ENCODE measurements at regions of chr3 and their contacts with region 1.

Region 1: GRCh38 chr3:112642912-112643506 is 2.1 kb upstream of the CCDC80 start:
- DNase-seq: peak; percentile 79
- H3K4me3 ChIP-seq: peak overlapping the region in 1 of 3 experiments; percentile 8
- H3K27ac ChIP-seq: peak overlapping the region; percentile 23
- H3K4me1 ChIP-seq: peaks cover 49% of the 10 kb centered on the region
- H3K27me3 ChIP-seq: no peaks in the 10 kb centered on the region
- CTCF ChIP-seq: peak; percentile 88 to 95

Region 2: GRCh38 chr3:112136959-112137693 is 505.9 kb before region 1 on chr3:
- CTCF ChIA-PET with region 1: no interaction called
- dilution Hi-C with region 1: no loop called
- in situ Hi-C with region 1: no loop called
- intact Hi-C with region 1: loop called (anchors 10 kb)
- DNase-seq: peak; percentile 53
- H3K4me3 ChIP-seq: no peak overlapping the region
- H3K27ac ChIP-seq: no peak overlapping the region
- H3K4me1 ChIP-seq: peaks cover 9% of the 10 kb centered on the region
- H3K27me3 ChIP-seq: no peaks in the 10 kb centered on the region
- CTCF ChIP-seq: peak; percentile 77 to 79

Region 3: GRCh38 chr3:112653209-112653871 is 10.3 kb after region 1 on chr3:
- CTCF ChIA-PET with region 1: interaction called, 13 read pairs
- dilution Hi-C with region 1: no loop called
- in situ Hi-C with region 1: no loop called
- intact Hi-C with region 1: loop called (anchors 1 kb)
- DNase-seq: peak; percentile 90
- H3K4me3 ChIP-seq: no peak overlapping the region
- H3K27ac ChIP-seq: peak overlapping the region; percentile 96
- H3K4me1 ChIP-seq: peaks cover 53% of the 10 kb centered on the region
- H3K27me3 ChIP-seq: no peaks in the 10 kb centered on the region
- CTCF ChIP-seq: no peak

Region 4: DNA sequence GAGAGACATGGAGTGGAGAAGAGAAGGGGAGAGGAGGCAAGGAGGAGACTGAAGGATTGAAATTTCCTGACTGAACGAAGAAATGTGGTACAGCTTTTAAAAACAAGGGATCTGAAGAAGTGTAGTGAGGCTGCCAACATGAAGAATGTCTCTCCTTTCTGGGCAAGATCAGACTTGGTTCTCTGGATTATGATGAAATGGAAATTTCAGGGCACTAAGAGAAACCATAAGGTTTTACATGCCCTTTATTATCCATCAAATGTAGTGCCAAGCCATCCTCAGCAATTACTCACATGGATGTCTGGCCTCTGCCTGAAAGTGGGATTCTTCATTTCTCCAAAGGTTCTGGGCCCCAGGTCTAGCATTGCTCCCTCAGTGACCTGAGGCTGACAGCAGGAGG is 75.5 kb after region 1 on chr3:
- CTCF ChIA-PET with region 1: no interaction called
- dilution Hi-C with region 1: no loop called
- in situ Hi-C with region 1: no loop called
- intact Hi-C with region 1: loop called (anchors 5 kb)
- DNase-seq: peak; percentile 76
- H3K4me3 ChIP-seq: no peak overlapping the region
- H3K27ac ChIP-seq: no peak overlapping the region
- H3K4me1 ChIP-seq: peaks cover 12% of the 10 kb centered on the region
- H3K27me3 ChIP-seq: no peaks in the 10 kb centered on the region
- CTCF ChIP-seq: no peak

Region 5: DNA sequence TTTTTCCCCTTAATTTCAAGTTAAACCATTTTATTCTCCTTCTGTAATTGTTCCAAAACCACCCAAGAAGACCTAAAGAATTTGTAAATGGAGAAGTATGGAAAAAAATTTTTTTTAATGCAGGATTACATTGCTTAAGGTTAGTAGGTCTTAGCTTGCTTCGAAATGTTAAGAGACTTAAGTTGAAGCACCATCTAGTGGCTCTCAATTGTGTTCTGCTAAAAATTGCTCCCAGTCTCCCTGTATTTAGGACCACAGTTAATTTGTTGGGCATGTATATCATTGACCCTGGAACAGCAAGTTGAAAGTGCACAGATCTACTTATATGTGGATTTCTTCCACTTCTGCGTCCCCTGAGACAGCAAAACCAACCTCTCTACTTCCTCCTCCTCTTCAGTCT is 171.3 kb after region 1 on chr3:
- CTCF ChIA-PET with region 1: interaction called, 7 read pairs
- dilution Hi-C with region 1: no loop called
- in situ Hi-C with region 1: loop called (anchors 5 kb)
- intact Hi-C with region 1: loop called (anchors 1 kb)
- DNase-seq: peak; percentile 46
- H3K4me3 ChIP-seq: no peak overlapping the region
- H3K27ac ChIP-seq: no peak overlapping the region
- H3K4me1 ChIP-seq: peaks cover 7% of the 10 kb centered on the region
- H3K27me3 ChIP-seq: no peaks in the 10 kb centered on the region
- CTCF ChIP-seq: peak; percentile 38 to 66

Region 6: DNA sequence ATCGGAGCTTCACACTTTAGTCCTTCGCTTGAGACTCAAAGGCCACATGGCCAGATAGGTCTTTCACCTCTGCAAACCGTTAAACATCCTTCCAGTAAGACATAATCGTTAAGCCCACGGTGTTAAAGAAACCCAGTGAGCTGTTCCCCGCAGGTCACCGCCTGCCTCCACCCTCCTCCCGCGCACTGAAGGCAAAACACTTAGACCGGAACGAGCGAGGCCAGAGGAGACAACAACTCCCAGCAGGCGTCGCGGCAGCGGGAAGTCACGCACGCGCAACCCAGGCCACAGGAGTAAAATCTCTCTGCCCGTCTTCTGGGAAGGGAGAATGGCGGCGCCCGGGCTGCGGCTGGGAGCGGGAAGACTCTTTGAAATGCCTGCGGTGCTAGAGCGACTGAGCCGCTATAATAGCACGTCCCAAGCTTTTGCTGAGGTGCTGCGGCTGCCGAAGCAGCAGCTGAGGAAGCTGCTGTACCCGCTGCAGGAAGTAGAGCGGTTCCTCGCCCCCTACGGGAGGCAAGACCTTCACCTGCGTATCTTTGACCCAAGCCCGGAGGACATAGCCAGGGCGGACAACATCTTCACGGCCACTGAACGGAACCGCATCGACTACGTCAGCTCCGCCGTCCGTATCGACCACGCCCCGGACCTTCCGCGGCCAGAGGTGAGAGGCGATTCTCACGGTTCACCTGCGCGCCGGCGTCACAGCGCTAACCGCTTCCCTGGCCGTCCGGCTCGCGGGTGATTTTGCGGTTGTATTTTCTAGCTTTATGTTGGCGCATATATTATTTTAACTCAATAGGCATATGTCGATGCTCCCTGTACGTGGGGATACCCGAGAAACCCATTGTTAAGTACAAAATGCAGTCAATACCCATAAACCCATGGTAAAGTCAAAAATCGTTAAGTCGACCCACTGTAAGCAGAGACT is 347.9 kb after region 1 on chr3 and contains the start of gene GTPBP8:
- CTCF ChIA-PET with region 1: interaction called, 7 read pairs
- dilution Hi-C with region 1: no loop called
- in situ Hi-C with region 1: loop called (anchors 5 to 10 kb)
- intact Hi-C with region 1: loop called (anchors 1 kb)
- DNase-seq: peak; percentile 91
- H3K4me3 ChIP-seq: peak within 1 kb of the TSS; percentile 70 to 84 (median 77)
- H3K27ac ChIP-seq: peak within 1 kb of the TSS; percentile 98
- H3K4me1 ChIP-seq: peaks cover 15% of the 10 kb centered on the region
- H3K27me3 ChIP-seq: no peaks in the 10 kb centered on the region
- CTCF ChIP-seq: peak in 1 of 2 donors; percentile 5
- total RNA-seq, gene GTPBP8: 18.0 to 31.8 TPM

Region 7: GRCh38 chr3:113249111-113249510 is 606.1 kb after region 1 on chr3:
- CTCF ChIA-PET with region 1: no interaction called
- dilution Hi-C with region 1: no loop called
- in situ Hi-C with region 1: no loop called
- intact Hi-C with region 1: no loop called
- DNase-seq: peak; percentile 84
- H3K4me3 ChIP-seq: no peak overlapping the region
- H3K27ac ChIP-seq: peak overlapping the region; percentile 69
- H3K4me1 ChIP-seq: peaks cover 33% of the 10 kb centered on the region
- H3K27me3 ChIP-seq: no peaks in the 10 kb centered on the region
- CTCF ChIP-seq: no peak

Region 8: GRCh38 chr3:113287803-113288648 is 645.0 kb after region 1 on chr3:
- CTCF ChIA-PET with region 1: no interaction called
- dilution Hi-C with region 1: no loop called
- in situ Hi-C with region 1: loop called in 1 of 2 experiments (anchors 25 kb)
- intact Hi-C with region 1: loop called (anchors 2 kb)
- DNase-seq: peak; percentile 44
- H3K4me3 ChIP-seq: no peak overlapping the region
- H3K27ac ChIP-seq: peak overlapping the region; percentile 56
- H3K4me1 ChIP-seq: peaks cover 29% of the 10 kb centered on the region
- H3K27me3 ChIP-seq: no peaks in the 10 kb centered on the region
- CTCF ChIP-seq: peak; percentile 100